Heart left ventricle (tissue), 16 donors: ENCODE measurements at regions of chr1 and their contacts with region 1.

Region 1: GRCh38 chr1:212284744-212285684 is at the start of gene PPP2R5A:
- DNase-seq: peak; percentile 99 to 100 (median 99)
- ATAC-seq: peak; percentile 95 to 99 (median 98)
- H3K4me3 ChIP-seq: peak within 1 kb of the TSS; percentile 79 to 98 (median 92)
- H3K27ac ChIP-seq: peak within 1 kb of the TSS; percentile 95 to 100 (median 99)
- H3K4me1 ChIP-seq: peaks cover 0 to 40% (median 21%) of the 10 kb centered on the region in 12 donors
- H3K27me3 ChIP-seq: no peaks in the 10 kb centered on the region
- CTCF ChIP-seq: peak in 5 of 12 donors; percentile 17 to 48 (median 39)
- POLR2A ChIP-seq: peak; percentile 59 to 97
- total RNA-seq, gene PPP2R5A: 52.0 to 102 (median 63.5) TPM

Region 2: GRCh38 chr1:212077051-212077450 is 208.0 kb before region 1 on chr1:
- intact Hi-C with region 1: loop called in 7 of 10 experiments (anchors 1 to 5 kb)
- DNase-seq: no peak
- ATAC-seq: no peak
- H3K4me3 ChIP-seq: no peak overlapping the region
- H3K27ac ChIP-seq: peak overlapping the region in 1 of 12 donors; percentile 52
- H3K4me1 ChIP-seq: peaks cover 0 to 10% (median 0%) of the 10 kb centered on the region in 12 donors
- H3K27me3 ChIP-seq: no peaks in the 10 kb centered on the region
- CTCF ChIP-seq: no peak
- POLR2A ChIP-seq: no peak

Region 3: GRCh38 chr1:212162635-212163034 is 122.4 kb before region 1 on chr1:
- intact Hi-C with region 1: loop called in 7 of 10 experiments (anchors 2 to 10 kb)
- DNase-seq: peak in 4 of 5 donors; percentile 68 to 73 (median 70)
- ATAC-seq: peak in 3 of 4 donors; percentile 59 to 80 (median 70)
- H3K4me3 ChIP-seq: no peak overlapping the region
- H3K27ac ChIP-seq: peak overlapping the region in 11 of 12 donors; percentile 10 to 75 (median 42)
- H3K4me1 ChIP-seq: peaks cover 3 to 50% (median 30%) of the 10 kb centered on the region in 12 donors
- H3K27me3 ChIP-seq: no peaks in the 10 kb centered on the region
- CTCF ChIP-seq: no peak
- POLR2A ChIP-seq: no peak

Region 4: GRCh38 chr1:212247179-212247721 is 37.8 kb before region 1 on chr1:
- intact Hi-C with region 1: loop called in 5 of 10 experiments (anchors 2 to 5 kb)
- DNase-seq: no peak
- ATAC-seq: peak in 3 of 4 donors; percentile 41 to 49 (median 48)
- H3K4me3 ChIP-seq: peak overlapping the region in 3 of 12 donors; percentile 3 to 30 (median 10)
- H3K27ac ChIP-seq: peak overlapping the region in 10 of 12 donors; percentile 8 to 64 (median 36)
- H3K4me1 ChIP-seq: peaks cover 0 to 31% (median 16%) of the 10 kb centered on the region in 12 donors
- H3K27me3 ChIP-seq: no peaks in the 10 kb centered on the region
- CTCF ChIP-seq: no peak
- POLR2A ChIP-seq: no peak